Prostate gland (tissue), 2 donors: ENCODE measurements at regions of chr16 and their contacts with region 1.

Region 1: GRCh38 chr16:75789237-75789636 is 62.9 kb upstream of the CPHXL start:
- DNase-seq: peak; percentile 18
- H3K4me3 ChIP-seq: no peak overlapping the region
- H3K27ac ChIP-seq: no peak overlapping the region
- H3K4me1 ChIP-seq: no peaks in the 10 kb centered on the region
- H3K27me3 ChIP-seq: no peaks in the 10 kb centered on the region
- CTCF ChIP-seq: peak; percentile 61 to 80 (median 78)
- POLR2A ChIP-seq: no peak

Region 2: GRCh38 chr16:75754141-75754540 is 35.1 kb before region 1 on chr16:
- intact Hi-C with region 1: no loop called
- DNase-seq: peak; percentile 65
- H3K4me3 ChIP-seq: no peak overlapping the region
- H3K27ac ChIP-seq: no peak overlapping the region
- H3K4me1 ChIP-seq: no peaks in the 10 kb centered on the region
- H3K27me3 ChIP-seq: no peaks in the 10 kb centered on the region
- CTCF ChIP-seq: no peak
- POLR2A ChIP-seq: no peak

Region 3: GRCh38 chr16:77171745-77172635 is 1382.8 kb after region 1 on chr16:
- intact Hi-C with region 1: loop called (anchors 5 kb)
- DNase-seq: peak; percentile 63
- H3K4me3 ChIP-seq: no peak overlapping the region
- H3K27ac ChIP-seq: no peak overlapping the region
- H3K4me1 ChIP-seq: no peaks in the 10 kb centered on the region
- H3K27me3 ChIP-seq: no peaks in the 10 kb centered on the region
- CTCF ChIP-seq: peak; percentile 36 to 76 (median 67)
- POLR2A ChIP-seq: no peak